Thyroid gland (tissue), 4 donors: ENCODE measurements at regions of chr5 and their contacts with region 1.

Region 1: GRCh38 chr5:67149951-67150523 is 46.6 kb downstream of the CD180 start:
- DNase-seq: no peak
- H3K4me3 ChIP-seq: no peak overlapping the region
- H3K27ac ChIP-seq: no peak overlapping the region
- H3K4me1 ChIP-seq: peaks cover 5 to 10% of the 10 kb centered on the region in 2 donors
- H3K27me3 ChIP-seq: no peaks in the 10 kb centered on the region
- CTCF ChIP-seq: peak in 4 of 6 experiments; percentile 31 to 66 (median 58)
- POLR2A ChIP-seq: no peak

Region 2: DNA sequence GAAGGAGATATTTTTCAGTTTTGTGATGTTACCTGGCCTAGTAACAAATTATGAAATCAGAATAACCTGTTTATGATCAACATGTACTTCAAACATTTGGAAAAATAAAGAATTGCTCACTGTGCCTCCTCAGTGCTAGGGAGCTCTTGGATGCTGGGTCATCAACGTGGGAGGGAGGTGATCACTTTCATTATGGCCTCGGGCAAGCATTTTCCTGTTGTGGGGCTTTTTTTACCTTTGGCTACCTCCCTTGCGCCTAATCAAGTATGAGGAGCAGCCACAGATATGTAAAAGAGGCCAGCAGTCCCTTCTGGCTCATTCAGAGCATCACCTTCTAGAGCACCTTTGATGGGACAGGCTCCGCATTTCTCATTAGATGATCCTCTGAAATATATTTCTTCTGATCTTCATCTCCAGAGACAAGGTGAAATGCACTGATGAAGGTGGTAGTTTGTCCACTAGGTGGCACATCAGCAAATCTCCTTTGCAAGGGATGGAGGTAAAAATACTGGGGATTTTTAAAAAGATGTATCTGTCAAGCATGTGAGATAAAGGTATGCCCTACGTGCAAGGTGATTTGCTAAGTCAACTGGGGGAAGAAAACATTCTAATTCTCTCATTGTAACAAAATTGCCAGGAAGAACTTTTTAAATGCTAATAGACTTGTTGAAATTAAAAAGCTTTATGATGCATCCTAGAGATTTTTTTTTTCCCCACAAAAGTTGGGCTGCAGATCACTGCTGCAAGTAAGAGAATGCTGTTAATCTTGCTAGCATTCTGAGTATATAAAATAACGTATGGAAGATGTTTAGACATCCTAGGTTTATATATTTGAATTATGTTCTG is 335.7 kb before region 1 on chr5:
- intact Hi-C with region 1: loop called (anchors 5 kb)
- DNase-seq: peak; percentile 46 to 56
- H3K4me3 ChIP-seq: no peak overlapping the region
- H3K27ac ChIP-seq: no peak overlapping the region
- H3K4me1 ChIP-seq: no peaks in the 10 kb centered on the region
- H3K27me3 ChIP-seq: no peaks in the 10 kb centered on the region
- CTCF ChIP-seq: peak; percentile 61 to 74 (median 68)
- POLR2A ChIP-seq: no peak

Region 3: GRCh38 chr5:66992547-66992946 is 157.5 kb before region 1 on chr5:
- intact Hi-C with region 1: loop called (anchors 10 kb)
- DNase-seq: no peak
- H3K4me3 ChIP-seq: no peak overlapping the region
- H3K27ac ChIP-seq: no peak overlapping the region
- H3K4me1 ChIP-seq: peaks cover 5 to 24% of the 10 kb centered on the region in 2 donors
- H3K27me3 ChIP-seq: no peaks in the 10 kb centered on the region
- CTCF ChIP-seq: no peak
- POLR2A ChIP-seq: no peak

Region 4: GRCh38 chr5:67465537-67466207 is 315.6 kb after region 1 on chr5:
- intact Hi-C with region 1: no loop called
- DNase-seq: no peak
- H3K4me3 ChIP-seq: no peak overlapping the region
- H3K27ac ChIP-seq: no peak overlapping the region
- H3K4me1 ChIP-seq: no peaks in the 10 kb centered on the region
- H3K27me3 ChIP-seq: no peaks in the 10 kb centered on the region
- CTCF ChIP-seq: no peak
- POLR2A ChIP-seq: no peak